Cardiac septum (tissue), 1 donor: ENCODE measurements at regions of chr5 and their contacts with region 1.

Region 1: DNA sequence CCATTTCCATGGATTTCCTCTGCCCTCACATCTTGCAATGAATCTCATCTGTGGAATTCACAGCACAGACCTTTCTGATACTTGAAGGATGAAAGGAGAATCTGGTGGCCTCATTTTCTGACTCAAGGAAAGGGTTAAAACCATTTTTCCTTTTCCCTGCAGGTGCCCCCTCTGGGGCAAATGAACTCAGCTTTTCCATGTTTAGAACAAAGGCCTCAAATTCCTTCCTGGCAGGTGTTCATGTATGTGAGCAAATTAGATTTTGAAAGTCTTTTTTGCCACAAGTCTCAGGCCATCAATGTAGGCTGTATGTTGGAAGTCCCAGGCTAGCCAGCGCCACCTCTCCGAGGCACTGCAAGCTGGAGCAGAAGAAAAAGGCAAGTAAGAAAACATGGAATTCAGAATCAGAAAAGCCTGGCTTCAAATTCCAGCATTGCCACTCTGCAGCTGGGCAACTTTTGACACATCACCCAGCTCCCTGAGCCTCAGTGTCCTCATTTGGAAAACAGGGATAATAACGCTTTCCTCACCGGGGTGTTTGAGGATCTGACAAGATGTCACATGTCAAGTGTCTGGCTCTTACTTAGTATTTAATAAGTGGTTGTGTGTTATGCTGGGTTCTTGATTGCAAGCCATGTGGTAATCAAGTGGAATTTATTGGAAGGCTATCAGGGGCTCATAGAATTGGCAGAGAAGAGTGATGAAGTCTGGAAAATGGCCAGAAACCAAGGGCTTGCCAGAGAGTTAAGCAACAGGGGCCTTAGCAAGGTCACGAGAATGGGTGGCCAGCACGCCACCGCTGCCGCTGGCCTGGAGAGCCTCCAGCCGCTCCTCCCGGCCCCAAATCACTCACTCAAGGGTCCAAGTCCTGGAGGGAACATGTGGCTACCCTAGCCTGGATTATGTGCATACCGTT is 48.4 kb upstream of the SMIM23 start:
- DNase-seq: no peak

Region 2: DNA sequence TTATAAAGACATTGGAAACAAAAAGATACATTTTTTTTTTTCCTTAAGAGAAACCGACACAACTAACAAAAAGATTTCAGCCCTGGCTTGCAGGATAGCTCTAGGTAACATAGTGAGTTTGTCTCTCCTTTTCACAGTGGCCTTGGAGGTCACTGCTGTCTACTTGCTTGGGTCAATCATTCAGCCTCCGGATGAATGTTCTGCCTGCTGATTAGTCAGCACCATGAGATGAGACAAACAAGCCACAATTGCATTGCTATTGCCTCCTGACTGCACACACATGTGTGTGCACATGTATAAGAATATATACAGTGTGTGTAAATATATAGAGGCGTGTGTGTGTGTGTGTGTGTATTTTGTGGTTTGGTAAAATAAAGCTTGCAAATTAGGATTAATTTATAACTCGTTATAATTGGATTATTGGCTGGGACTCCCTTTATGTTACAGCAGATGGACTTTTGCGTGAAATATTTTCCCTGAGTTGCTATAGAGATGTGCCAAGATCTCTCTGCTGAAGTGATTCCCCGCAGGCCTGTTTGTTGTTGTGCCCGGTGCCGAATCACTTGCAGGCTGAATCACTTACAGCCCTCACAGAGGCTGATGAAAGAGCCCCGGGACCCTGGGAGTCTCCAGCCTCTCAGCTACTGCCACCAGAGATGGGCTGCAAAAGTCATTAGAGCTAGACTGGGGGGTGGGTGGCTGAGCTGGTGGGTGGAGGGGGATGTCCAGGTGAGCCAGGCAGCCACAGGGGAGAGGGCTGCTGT is 156.6 kb before region 1 on chr5:
- intact Hi-C with region 1: loop called (anchors 2 kb)
- DNase-seq: no peak

Region 3: DNA sequence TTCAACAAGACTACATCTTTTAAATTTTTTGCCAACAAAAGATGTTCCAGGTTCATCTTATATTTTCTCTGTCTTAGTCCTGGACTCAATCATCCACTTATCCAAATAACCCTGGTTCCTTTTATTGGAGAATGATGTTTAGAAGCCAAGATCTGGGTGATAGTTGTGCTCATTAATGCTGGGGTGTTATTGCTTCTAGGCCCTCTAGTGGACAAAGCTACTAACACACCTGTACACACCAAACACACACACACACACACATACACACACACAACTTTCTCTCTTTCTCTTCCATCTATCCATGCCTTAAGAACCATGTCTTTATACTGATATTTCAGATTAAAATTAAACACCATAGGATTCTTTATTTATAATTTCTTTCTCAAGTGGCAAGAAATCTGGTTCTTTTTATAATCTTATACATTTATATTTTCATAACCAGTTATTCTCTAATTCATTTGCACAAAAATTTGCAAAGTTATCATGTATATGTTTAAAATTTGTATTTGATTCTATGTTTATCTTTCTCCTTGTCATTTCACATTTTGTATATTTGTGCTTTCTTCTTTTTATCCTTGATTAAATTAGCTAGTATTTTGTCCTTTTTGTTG is 130.7 kb before region 1 on chr5:
- intact Hi-C with region 1: no loop called
- DNase-seq: no peak

Region 4: DNA sequence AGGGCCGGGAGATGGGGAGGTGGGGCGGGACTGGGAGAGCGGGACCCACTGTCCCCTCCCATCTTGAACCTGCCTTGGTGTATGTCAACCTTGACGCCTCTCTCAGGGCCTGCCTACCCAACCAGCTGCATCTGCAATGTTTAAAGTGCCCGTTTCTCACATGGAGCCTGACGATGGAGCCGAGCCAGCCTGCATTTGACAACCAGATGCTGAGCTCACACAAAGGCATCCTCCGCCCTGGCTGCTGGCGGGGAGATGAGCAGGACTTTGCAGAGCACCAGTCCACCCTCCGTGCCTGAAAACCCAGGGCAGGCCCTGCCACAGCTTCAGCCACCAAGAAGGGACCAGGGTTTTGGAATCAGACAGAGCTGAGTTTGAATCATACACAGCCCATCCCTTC is 92.7 kb before region 1 on chr5:
- intact Hi-C with region 1: loop called (anchors 5 kb)
- DNase-seq: no peak

Region 5: DNA sequence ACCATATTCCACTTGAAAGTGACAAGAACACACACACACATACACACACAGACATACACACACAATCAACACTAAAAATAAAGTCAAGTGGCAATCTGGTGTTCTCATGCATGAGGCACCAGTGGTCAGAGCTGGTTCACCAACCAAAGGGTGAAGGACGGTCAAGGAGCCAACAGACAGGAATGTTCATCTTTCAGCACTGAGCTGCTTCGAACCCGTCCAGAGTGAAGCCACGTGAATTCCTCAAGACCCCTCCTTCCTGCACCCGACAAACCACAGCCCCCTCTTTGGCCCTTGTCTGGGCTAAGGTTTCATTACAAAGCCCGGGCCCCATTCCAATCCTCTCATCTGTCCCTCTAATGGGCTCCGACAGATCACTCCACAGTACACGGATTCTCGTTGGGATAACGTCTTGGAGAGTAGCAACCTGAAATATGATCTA is 36.1 kb before region 1 on chr5:
- intact Hi-C with region 1: loop called (anchors 5 kb)
- DNase-seq: no peak

Region 6: GRCh38 chr5:171776770-171777759 is 39.8 kb after region 1 on chr5:
- intact Hi-C with region 1: no loop called
- DNase-seq: no peak

Region 7: DNA sequence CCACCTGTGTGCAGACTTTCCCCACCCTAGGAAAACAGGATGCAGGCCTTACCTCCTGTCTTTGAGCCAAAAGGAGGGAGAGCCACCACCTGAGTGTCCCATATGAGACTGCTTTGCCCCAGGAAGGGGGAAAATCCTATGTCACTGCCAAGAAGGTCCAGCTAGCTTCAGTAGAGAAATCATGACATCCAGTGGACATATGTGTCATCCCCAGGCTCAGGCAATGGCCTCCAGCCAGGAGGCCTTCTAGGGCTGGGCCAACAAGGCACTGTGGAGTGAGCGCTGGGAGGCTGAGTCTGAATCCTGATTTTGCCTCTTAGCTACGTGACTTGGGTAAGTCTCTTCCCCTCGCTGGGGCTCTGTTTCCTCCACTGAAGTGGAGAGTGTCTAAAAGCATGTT is 108.6 kb after region 1 on chr5:
- intact Hi-C with region 1: loop called (anchors 10 kb)
- DNase-seq: no peak